Adrenal gland (tissue), 19 donors: ENCODE measurements at regions of chr13 and their contacts with region 1.

Region 1: DNA sequence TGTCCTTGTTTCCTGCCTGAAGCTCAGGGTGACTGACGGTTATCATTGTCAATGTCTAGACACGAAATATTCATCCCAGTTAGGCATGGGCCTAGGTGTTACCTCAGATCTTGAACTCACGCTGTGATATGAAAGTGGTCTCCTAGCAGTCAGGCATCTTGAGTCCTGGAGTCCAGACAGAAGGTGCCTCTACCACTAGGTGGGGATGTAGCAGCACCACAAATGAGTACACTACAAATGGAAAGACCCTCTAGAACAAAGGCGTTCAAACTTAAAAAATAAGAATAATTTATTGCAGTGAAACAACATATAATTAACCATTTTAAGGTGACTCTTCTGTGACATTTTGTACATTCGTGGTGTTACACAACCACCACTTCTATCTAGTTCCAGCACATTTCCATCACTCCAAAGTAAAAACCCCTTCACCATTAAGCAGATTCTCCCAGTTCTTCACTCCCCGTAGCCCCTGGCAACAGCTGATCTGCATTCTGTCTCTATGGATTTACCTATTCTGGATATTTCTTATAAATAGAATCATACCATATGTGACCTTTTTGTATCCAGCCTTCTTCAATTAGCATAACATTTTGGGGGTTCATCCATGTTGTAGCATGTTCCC is 11.9 kb upstream of the FRY start:
- DNase-seq: peak; percentile 21 to 72 (median 39)
- H3K4me3 ChIP-seq: no peak overlapping the region
- H3K27ac ChIP-seq: no peak overlapping the region
- H3K4me1 ChIP-seq: no peaks in the 10 kb centered on the region
- H3K27me3 ChIP-seq: no peaks in the 10 kb centered on the region
- CTCF ChIP-seq: peak; percentile 38 to 68 (median 52)
- POLR2A ChIP-seq: no peak

Region 2: GRCh38 chr13:30551189-30551588 is 1468.5 kb before region 1 on chr13:
- intact Hi-C with region 1: no loop called
- DNase-seq: peak in 1 of 7 donors; percentile 10
- H3K4me3 ChIP-seq: no peak overlapping the region
- H3K27ac ChIP-seq: no peak overlapping the region
- H3K4me1 ChIP-seq: no peaks in the 10 kb centered on the region
- H3K27me3 ChIP-seq: no peaks in the 10 kb centered on the region
- CTCF ChIP-seq: peak in 4 of 6 experiments; percentile 24 to 38 (median 28)
- POLR2A ChIP-seq: no peak

Region 3: DNA sequence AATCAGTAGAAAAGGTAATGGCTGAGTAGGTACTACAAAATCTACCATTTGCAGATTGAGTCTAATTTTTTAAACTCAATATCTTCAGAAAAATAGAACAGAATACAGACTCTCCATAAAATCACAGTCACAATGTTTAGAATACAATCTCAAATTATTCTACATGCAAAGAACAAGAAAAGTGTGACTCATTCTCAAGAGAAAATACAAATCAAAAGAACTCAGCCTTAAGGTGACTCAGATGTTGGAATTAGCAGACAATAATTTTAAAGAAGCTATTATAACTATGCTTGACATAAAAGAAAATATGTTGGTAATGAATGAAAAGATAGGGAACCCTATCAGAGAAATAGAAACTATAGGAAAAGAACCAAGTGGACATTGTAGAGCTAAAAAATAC is 201.5 kb before region 1 on chr13:
- intact Hi-C with region 1: no loop called
- DNase-seq: no peak
- H3K4me3 ChIP-seq: no peak overlapping the region
- H3K27ac ChIP-seq: no peak overlapping the region
- H3K4me1 ChIP-seq: no peaks in the 10 kb centered on the region
- H3K27me3 ChIP-seq: no peaks in the 10 kb centered on the region
- CTCF ChIP-seq: no peak
- POLR2A ChIP-seq: no peak

Region 4: DNA sequence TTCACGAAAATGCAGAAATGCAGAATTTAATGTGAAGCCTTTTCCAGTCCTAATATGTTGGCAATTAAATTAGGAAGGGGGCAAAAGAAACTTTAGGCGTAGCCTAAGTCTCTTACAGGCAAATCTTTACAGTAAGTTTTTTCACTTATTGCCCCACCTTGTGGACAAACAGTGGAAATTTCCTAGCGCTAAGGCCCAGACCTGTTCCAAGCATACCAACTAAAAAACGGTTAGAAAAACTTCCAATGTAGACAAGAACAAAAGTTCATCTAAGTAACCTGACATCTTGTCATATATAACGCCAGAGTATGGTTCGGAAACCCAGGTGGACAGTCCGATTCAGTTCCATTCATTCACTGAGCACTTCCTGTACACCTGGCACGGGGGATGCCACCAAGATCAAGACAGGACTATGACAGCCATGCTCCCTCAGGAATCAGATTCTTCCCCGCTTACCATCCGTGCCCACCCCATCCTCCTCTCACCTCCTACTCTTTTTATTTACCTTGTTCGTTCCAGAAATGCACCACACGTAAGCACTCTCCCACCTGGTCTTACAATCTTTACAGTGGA is 290.5 kb after region 1 on chr13:
- intact Hi-C with region 1: loop called (anchors 5 to 10 kb)
- DNase-seq: peak in 1 of 7 donors; percentile 20
- H3K4me3 ChIP-seq: peak overlapping the region in 1 of 4 donors; percentile 2
- H3K27ac ChIP-seq: no peak overlapping the region
- H3K4me1 ChIP-seq: no peaks in the 10 kb centered on the region
- H3K27me3 ChIP-seq: no peaks in the 10 kb centered on the region
- CTCF ChIP-seq: peak; percentile 57 to 82 (median 70)
- POLR2A ChIP-seq: no peak

Region 5: DNA sequence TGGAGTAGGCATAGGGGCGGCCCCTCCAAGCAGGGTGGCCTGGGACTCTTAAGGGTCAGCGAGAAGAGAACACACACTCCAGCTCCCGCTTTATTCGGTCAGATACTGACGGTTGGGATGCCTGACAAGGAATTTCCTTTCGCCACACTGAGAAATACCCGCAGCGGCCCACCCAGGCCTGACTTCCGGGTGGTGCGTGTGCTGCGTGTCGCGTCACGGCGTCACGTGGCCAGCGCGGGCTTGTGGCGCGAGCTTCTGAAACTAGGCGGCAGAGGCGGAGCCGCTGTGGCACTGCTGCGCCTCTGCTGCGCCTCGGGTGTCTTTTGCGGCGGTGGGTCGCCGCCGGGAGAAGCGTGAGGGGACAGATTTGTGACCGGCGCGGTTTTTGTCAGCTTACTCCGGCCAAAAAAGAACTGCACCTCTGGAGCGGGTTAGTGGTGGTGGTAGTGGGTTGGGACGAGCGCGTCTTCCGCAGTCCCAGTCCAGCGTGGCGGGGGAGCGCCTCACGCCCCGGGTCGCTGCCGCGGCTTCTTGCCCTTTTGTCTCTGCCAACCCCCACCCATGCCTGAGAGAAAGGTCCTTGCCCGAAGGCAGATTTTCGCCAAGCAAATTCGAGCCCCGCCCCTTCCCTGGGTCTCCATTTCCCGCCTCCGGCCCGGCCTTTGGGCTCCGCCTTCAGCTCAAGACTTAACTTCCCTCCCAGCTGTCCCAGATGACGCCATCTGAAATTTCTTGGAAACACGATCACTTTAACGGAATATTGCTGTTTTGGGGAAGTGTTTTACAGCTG is 295.7 kb after region 1 on chr13 and contains the starts of genes BRCA2 and ZAR1L:
- intact Hi-C with region 1: loop called (anchors 5 to 10 kb)
- DNase-seq: peak; percentile 86 to 92 (median 91)
- H3K4me3 ChIP-seq: peak within 1 kb of the TSS in 3 of 4 donors; percentile 26 to 76 (median 66)
- H3K27ac ChIP-seq: peak within 1 kb of the TSS; percentile 36 to 95 (median 90)
- H3K4me1 ChIP-seq: no peaks in the 10 kb centered on the region
- H3K27me3 ChIP-seq: no peaks in the 10 kb centered on the region
- CTCF ChIP-seq: no peak
- POLR2A ChIP-seq: peak; percentile 24 to 76
- total RNA-seq, gene BRCA2: 0.41 to 4.5 (median 1.3) TPM
- total RNA-seq, gene ZAR1L: not detected